ENCODE measurements at regions of chr3 and their contacts with region 1.

Region 1: GRCh38 chr3:141738022-141738890 is at the start of gene RNF7:
- DNase-seq: peak; percentile 96
- H3K4me3 Mint-ChIP-seq: peak within 1 kb of the TSS; percentile 100
- H3K27ac Mint-ChIP-seq: peak within 1 kb of the TSS; percentile 99
- H3K4me1 Mint-ChIP-seq: peaks cover 42% of the 10 kb centered on the region
- H3K27me3 Mint-ChIP-seq: peaks cover 8% of the 10 kb centered on the region

Region 2: GRCh38 chr3:141578202-141578973 is 159.9 kb before region 1 on chr3:
- CTCF ChIA-PET with region 1: no interaction called
- DNase-seq: no peak
- H3K4me3 Mint-ChIP-seq: no peak overlapping the region
- H3K27ac Mint-ChIP-seq: no peak overlapping the region
- H3K4me1 Mint-ChIP-seq: peaks cover 10% of the 10 kb centered on the region
- H3K27me3 Mint-ChIP-seq: no peaks in the 10 kb centered on the region

Region 3: GRCh38 chr3:141796889-141797781 is 58.9 kb after region 1 on chr3:
- CTCF ChIA-PET with region 1: interaction called, 10 read pairs
- DNase-seq: peak; percentile 61
- H3K4me3 Mint-ChIP-seq: peak overlapping the region; percentile 83
- H3K27ac Mint-ChIP-seq: peak overlapping the region; percentile 96
- H3K4me1 Mint-ChIP-seq: peaks cover 53% of the 10 kb centered on the region
- H3K27me3 Mint-ChIP-seq: peaks cover 4% of the 10 kb centered on the region

Region 4: GRCh38 chr3:141875374-141875892 is 137.2 kb after region 1 on chr3:
- CTCF ChIA-PET with region 1: interaction called, 42 read pairs
- DNase-seq: peak; percentile 88
- H3K4me3 Mint-ChIP-seq: peak overlapping the region; percentile 80
- H3K27ac Mint-ChIP-seq: peak overlapping the region; percentile 92
- H3K4me1 Mint-ChIP-seq: peaks cover 42% of the 10 kb centered on the region
- H3K27me3 Mint-ChIP-seq: peaks cover 10% of the 10 kb centered on the region

Region 5: GRCh38 chr3:141913150-141913811 is 175.0 kb after region 1 on chr3:
- CTCF ChIA-PET with region 1: interaction called, 22 read pairs
- DNase-seq: peak; percentile 70
- H3K4me3 Mint-ChIP-seq: no peak overlapping the region
- H3K27ac Mint-ChIP-seq: no peak overlapping the region
- H3K4me1 Mint-ChIP-seq: peaks cover 2% of the 10 kb centered on the region
- H3K27me3 Mint-ChIP-seq: no peaks in the 10 kb centered on the region

Measured in activated naive CD4-positive, alpha-beta T cell treated with anti-CD3 and anti-CD28 coated beads, Interleukin-2, amount 10 ng/mL, durations not matched to agents 7 days and 5 days (primary cell).